ENCODE measurements at regions of chr7 and their contacts with region 1.

Region 1: DNA sequence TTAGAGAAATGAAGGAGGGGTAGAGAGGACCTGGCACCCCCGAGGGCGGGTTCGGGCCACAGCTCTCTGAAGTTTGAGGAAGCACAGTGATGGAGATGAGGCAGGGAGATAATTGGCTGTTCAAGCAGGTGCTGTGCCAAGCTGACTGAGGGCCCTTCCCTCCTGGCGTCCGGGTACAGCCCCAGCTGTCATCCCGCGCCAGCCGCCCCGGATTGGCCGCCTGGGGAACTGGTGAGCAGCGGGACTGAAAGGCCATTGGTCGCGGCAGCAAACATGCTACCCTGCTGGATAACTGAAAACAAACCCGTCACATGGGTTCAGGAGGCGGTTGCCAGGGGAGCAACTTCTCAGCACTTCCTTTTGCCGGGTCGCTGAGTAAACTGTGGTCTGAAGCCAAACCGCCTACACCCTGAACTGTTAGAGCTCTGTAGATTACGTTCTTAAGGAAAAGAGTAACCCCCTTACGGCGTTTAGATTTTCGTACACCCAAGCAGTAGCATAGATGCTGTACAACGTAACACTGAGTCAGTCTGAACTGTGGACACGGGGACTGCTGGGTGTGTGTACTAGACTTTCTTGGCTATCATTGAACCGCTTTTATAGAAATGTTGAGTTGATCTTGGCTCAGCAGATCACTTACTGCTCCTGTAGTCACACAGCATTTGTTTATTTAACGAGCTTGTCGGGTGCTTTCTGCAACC is 1.3 kb downstream of the INSIG1 start:
- DNase-seq: peak; percentile 93 to 98
- ATAC-seq: peak; percentile 66 to 78 (median 71)
- H3K4me3 ChIP-seq: peak overlapping the region; percentile 58
- H3K4me3 Mint-ChIP-seq: peak overlapping the region; percentile 99
- H3K27ac ChIP-seq: peak overlapping the region; percentile 94
- H3K27ac Mint-ChIP-seq: peak overlapping the region; percentile 95 to 97
- H3K4me1 ChIP-seq: peaks cover 34% of the 10 kb centered on the region
- H3K4me1 Mint-ChIP-seq: peaks cover 56 to 58% of the 10 kb centered on the region in 2 donors
- H3K27me3 ChIP-seq: no peaks in the 10 kb centered on the region
- H3K27me3 Mint-ChIP-seq: no peaks in the 10 kb centered on the region
- CTCF ChIP-seq: no peak

Region 2: GRCh38 chr7:155003376-155004214 is 295.4 kb before region 1 on chr7:
- intact Hi-C with region 1: loop called (anchors 1 kb)
- DNase-seq: peak; percentile 83 to 91
- ATAC-seq: peak; percentile 89 to 94 (median 89)
- H3K4me3 ChIP-seq: peak overlapping the region; percentile 96
- H3K4me3 Mint-ChIP-seq: peak overlapping the region; percentile 89
- H3K27ac ChIP-seq: peak overlapping the region; percentile 67
- H3K27ac Mint-ChIP-seq: peak overlapping the region; percentile 73 to 81
- H3K4me1 ChIP-seq: peaks cover 14% of the 10 kb centered on the region
- H3K4me1 Mint-ChIP-seq: peaks cover 5 to 12% of the 10 kb centered on the region in 2 donors
- H3K27me3 ChIP-seq: no peaks in the 10 kb centered on the region
- H3K27me3 Mint-ChIP-seq: no peaks in the 10 kb centered on the region
- CTCF ChIP-seq: no peak

Region 3: GRCh38 chr7:155136619-155137243 is 162.3 kb before region 1 on chr7:
- intact Hi-C with region 1: no loop called
- DNase-seq: no peak
- ATAC-seq: no peak
- H3K4me3 ChIP-seq: no peak overlapping the region
- H3K4me3 Mint-ChIP-seq: no peak overlapping the region
- H3K27ac ChIP-seq: no peak overlapping the region
- H3K27ac Mint-ChIP-seq: no peak overlapping the region
- H3K4me1 ChIP-seq: no peaks in the 10 kb centered on the region
- H3K4me1 Mint-ChIP-seq: no peaks in the 10 kb centered on the region
- H3K27me3 ChIP-seq: no peaks in the 10 kb centered on the region
- H3K27me3 Mint-ChIP-seq: peaks cover 16 to 20% of the 10 kb centered on the region in 2 donors
- CTCF ChIP-seq: no peak

Region 4: GRCh38 chr7:155190688-155191087 is 108.3 kb before region 1 on chr7:
- intact Hi-C with region 1: loop called (anchors 5 kb)
- DNase-seq: peak; percentile 66 to 70
- ATAC-seq: peak; percentile 77 to 99 (median 92)
- H3K4me3 ChIP-seq: no peak overlapping the region
- H3K4me3 Mint-ChIP-seq: no peak overlapping the region
- H3K27ac ChIP-seq: no peak overlapping the region
- H3K27ac Mint-ChIP-seq: no peak overlapping the region
- H3K4me1 ChIP-seq: peaks cover 3% of the 10 kb centered on the region
- H3K4me1 Mint-ChIP-seq: peaks cover 5 to 11% of the 10 kb centered on the region in 2 donors
- H3K27me3 ChIP-seq: no peaks in the 10 kb centered on the region
- H3K27me3 Mint-ChIP-seq: peaks cover 14 to 22% of the 10 kb centered on the region in 2 donors
- CTCF ChIP-seq: peak; percentile 83

Region 5: GRCh38 chr7:155205368-155206317 is 93.3 kb before region 1 on chr7:
- intact Hi-C with region 1: loop called (anchors 1 kb)
- DNase-seq: peak; percentile 83 to 96
- ATAC-seq: peak; percentile 82 to 93 (median 88)
- H3K4me3 ChIP-seq: peak overlapping the region; percentile 37
- H3K4me3 Mint-ChIP-seq: peak overlapping the region; percentile 96
- H3K27ac ChIP-seq: peak overlapping the region; percentile 93
- H3K27ac Mint-ChIP-seq: peak overlapping the region; percentile 96 to 98
- H3K4me1 ChIP-seq: peaks cover 25% of the 10 kb centered on the region
- H3K4me1 Mint-ChIP-seq: peaks cover 21 to 35% of the 10 kb centered on the region in 2 donors
- H3K27me3 ChIP-seq: no peaks in the 10 kb centered on the region
- H3K27me3 Mint-ChIP-seq: peaks cover 0 to 4% of the 10 kb centered on the region in 2 donors
- CTCF ChIP-seq: no peak

Region 6: DNA sequence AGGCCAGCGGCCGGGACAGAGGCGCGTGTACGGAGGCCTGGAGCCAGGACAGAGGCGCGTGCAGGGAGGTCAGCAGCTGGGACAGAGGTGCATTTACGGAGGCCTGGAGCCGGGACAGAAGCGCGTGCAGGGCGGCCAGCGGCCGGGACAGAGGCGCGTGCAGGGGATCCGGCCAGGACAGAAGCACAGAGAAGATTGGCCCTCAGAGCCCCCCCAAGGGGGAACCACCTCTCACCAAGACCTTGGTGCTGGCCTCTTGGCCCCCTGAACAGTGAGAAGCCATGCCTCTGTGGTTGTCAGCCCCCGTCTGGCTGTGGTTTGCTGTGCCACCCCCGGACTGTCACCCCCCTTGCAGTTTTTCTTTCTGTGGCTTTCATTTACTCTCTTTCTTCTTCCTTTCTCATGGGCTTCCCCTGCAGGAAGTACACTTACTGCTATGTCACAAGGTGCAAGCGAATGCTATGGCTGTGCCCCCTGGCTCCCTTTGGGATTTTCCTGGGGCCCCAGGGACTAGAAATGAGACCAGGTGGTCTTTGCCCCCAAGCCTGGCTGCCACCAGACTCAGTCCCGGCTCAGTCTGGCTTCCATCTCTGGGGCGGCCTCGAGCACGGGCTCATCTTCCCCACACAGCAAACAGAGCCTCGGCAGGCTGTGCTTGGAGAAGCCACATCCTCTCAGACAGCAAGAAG is 39.8 kb after region 1 on chr7:
- intact Hi-C with region 1: loop called (anchors 2 kb)
- DNase-seq: peak; percentile 23 to 72
- ATAC-seq: peak; percentile 69 to 84 (median 83)
- H3K4me3 ChIP-seq: no peak overlapping the region
- H3K4me3 Mint-ChIP-seq: peak overlapping the region; percentile 56
- H3K27ac ChIP-seq: no peak overlapping the region
- H3K27ac Mint-ChIP-seq: peak overlapping the region in 1 of 2 donors; percentile 59
- H3K4me1 ChIP-seq: peaks cover 16% of the 10 kb centered on the region
- H3K4me1 Mint-ChIP-seq: peaks cover 4 to 23% of the 10 kb centered on the region in 2 donors
- H3K27me3 ChIP-seq: peaks cover 3% of the 10 kb centered on the region
- H3K27me3 Mint-ChIP-seq: peaks cover 7 to 16% of the 10 kb centered on the region in 2 donors
- CTCF ChIP-seq: no peak

Region 7: GRCh38 chr7:156892821-156893706 is 1594.1 kb after region 1 on chr7 and contains the start of gene LMBR1:
- intact Hi-C with region 1: loop called (anchors 5 kb)
- DNase-seq: peak; percentile 95 to 98
- ATAC-seq: peak; percentile 83 to 96 (median 85)
- H3K4me3 ChIP-seq: peak within 1 kb of the TSS; percentile 94
- H3K4me3 Mint-ChIP-seq: peak within 1 kb of the TSS; percentile 97
- H3K27ac ChIP-seq: peak within 1 kb of the TSS; percentile 87
- H3K27ac Mint-ChIP-seq: peak within 1 kb of the TSS; percentile 91 to 96
- H3K4me1 ChIP-seq: peaks cover 19% of the 10 kb centered on the region
- H3K4me1 Mint-ChIP-seq: peaks cover 19 to 40% of the 10 kb centered on the region in 2 donors
- H3K27me3 ChIP-seq: no peaks in the 10 kb centered on the region
- H3K27me3 Mint-ChIP-seq: peaks cover 0 to 4% of the 10 kb centered on the region in 2 donors
- CTCF ChIP-seq: peak; percentile 59
- total RNA-seq, gene LMBR1: 60.4 to 71.7 (median 66.1) TPM